Lower leg skin (tissue), 4 donors: ENCODE measurements at regions of chr17 and their contacts with region 1.

Region 1: GRCh38 chr17:64411999-64412771 is 21.5 kb upstream of the PECAM1 start:
- DNase-seq: peak; percentile 43 to 89
- H3K4me3 ChIP-seq: no peak overlapping the region
- CTCF ChIP-seq: no peak
- POLR2A ChIP-seq: no peak

Region 2: DNA sequence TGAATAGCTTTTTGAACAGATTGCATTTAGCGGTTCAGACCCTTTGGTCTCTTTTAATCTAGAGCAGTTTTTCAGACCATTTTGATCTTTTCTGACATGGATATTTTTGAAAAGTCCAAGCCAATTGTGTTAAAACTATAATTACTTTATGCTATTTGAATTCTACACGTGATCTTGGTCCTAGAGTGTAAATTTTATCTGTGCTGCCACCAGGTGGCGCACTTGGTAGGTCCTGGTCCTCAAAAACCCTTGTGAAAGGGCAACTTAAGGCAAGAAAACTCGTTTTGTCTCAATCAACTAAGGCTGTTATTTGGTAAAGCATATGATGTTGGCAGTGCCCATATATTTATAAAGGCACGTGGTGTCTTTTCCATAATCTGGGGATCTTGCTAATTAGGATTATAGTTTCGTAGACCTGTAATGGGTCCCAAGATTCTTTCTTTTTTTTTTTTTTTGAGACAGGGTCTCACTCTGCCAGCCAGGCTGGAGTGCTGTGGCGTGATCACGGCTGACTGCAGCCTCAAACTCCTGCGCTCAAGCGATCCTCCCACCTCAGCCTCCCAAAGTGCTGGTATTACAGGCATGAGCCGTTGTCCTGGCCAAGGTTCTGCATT is 105.2 kb before region 1 on chr17:
- intact Hi-C with region 1: loop called (anchors 5 kb)
- DNase-seq: peak; percentile 52 to 93
- H3K4me3 ChIP-seq: no peak overlapping the region
- CTCF ChIP-seq: peak in 1 of 3 donors; percentile 57
- POLR2A ChIP-seq: no peak